ENCODE measurements at regions of chr4 and their contacts with region 1.

Region 1: DNA sequence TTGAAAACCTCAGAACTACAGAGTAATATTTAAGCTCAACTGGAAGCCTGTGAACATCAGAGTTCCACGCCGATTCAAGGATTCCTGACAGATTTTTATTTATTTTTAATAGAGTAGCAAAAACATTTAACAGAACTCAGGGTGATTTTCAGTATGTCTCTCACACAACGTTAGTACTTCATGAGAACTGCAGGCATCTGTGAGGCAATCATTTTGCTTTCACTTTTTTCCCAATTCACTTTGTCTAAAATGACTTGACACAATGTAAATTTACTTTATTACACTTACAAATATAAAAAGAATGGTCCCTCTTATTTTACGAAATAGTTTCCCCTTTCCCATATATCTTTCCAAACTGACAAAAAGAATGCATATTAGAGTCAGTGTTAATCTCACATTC is 869.5 kb upstream of the EPHA5 start:
- DNase-seq: no peak
- ATAC-seq: no peak
- H3K4me3 Mint-ChIP-seq: no peak overlapping the region
- H3K27ac Mint-ChIP-seq: no peak overlapping the region
- H3K4me1 Mint-ChIP-seq: no peaks in the 10 kb centered on the region
- H3K27me3 Mint-ChIP-seq: no peaks in the 10 kb centered on the region

Region 2: GRCh38 chr4:65798498-65799127 is 741.1 kb before region 1 on chr4:
- CTCF ChIA-PET with region 1: no interaction called
- POLR2A ChIA-PET with region 1: no interaction called
- intact Hi-C with region 1: loop called in 1 of 2 experiments (anchors 5 kb)
- DNase-seq: no peak
- ATAC-seq: no peak
- H3K4me3 Mint-ChIP-seq: no peak overlapping the region
- H3K27ac Mint-ChIP-seq: no peak overlapping the region
- H3K4me1 Mint-ChIP-seq: no peaks in the 10 kb centered on the region
- H3K27me3 Mint-ChIP-seq: no peaks in the 10 kb centered on the region

Region 3: DNA sequence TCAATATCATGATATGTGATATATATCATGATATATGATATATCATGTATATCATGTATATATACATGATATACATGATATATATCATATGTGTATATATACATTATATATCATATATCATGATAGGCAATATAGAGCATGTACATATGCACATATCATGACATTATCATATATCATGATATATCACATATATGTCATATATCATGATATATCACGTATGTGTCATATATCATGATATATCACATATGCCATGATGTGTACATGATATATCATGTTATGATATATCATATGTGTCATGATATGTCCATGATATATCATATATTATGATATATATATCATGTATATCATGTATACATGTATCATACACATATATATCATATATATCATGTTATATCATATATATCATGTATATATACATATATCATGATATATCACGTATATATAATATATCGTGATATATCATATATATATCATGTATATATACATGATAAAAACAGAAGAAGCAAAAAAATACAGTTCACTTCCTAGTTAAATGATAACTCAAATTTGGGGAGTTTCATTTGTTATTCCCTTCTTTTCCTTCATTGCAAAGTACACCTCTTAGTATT is 199.4 kb before region 1 on chr4:
- CTCF ChIA-PET with region 1: no interaction called
- POLR2A ChIA-PET with region 1: no interaction called
- intact Hi-C with region 1: no loop called
- DNase-seq: no peak
- ATAC-seq: no peak
- H3K4me3 Mint-ChIP-seq: no peak overlapping the region
- H3K27ac Mint-ChIP-seq: no peak overlapping the region
- H3K4me1 Mint-ChIP-seq: no peaks in the 10 kb centered on the region
- H3K27me3 Mint-ChIP-seq: no peaks in the 10 kb centered on the region